ENCODE measurements at regions of chr7 and their contacts with region 1.

Region 1: DNA sequence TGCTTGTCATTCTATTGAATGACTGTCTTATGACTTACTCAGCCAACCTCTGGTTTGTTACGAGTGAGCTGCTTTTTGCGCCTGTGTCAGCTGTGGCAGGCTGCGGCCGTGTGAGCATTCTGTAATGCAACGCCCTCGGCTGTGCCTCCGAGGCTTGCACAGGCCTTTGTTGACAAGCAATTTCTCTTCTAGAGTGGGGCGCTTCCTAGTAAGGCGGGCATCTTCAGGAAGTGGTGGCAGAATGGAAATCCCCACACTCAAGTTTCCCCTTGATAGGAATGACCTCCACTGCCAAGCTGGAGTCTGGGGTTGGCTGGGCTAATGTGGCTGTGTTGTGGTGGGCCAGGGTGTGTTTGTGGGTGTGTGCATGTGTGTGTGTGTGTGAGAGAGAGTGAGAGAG is 20.2 kb upstream of the TMEM178B start:
- DNase-seq: peak; percentile 84
- H3K4me3 Mint-ChIP-seq: no peak overlapping the region
- H3K27ac Mint-ChIP-seq: peak overlapping the region; percentile 57
- H3K4me1 Mint-ChIP-seq: peaks cover 22% of the 10 kb centered on the region
- H3K27me3 Mint-ChIP-seq: no peaks in the 10 kb centered on the region

Region 2: DNA sequence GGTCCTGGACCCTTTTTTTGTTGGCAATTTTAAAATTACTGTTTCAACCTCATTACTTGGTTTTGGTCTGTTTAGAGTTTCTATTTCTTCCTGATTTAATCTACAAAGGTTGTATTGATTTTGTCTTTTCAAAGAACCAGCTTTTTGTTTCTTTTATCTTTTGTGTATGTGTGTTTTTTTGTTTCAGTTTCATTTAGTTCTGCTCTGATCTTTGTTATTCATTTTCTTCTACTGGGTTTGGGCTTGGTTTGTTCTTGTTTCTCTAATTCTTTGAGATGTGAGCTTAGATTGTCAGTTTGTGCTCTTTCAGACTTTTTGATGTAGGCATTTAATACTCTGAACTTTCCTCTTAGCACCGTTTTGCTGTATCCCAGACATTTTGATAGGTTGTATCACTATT is 30.3 kb before region 1 on chr7:
- CTCF ChIA-PET with region 1: no interaction called
- POLR2A ChIA-PET with region 1: no interaction called
- intact Hi-C with region 1: loop called (anchors 2 kb)
- DNase-seq: no peak
- H3K4me3 Mint-ChIP-seq: peak overlapping the region; percentile 0
- H3K27ac Mint-ChIP-seq: peak overlapping the region; percentile 20
- H3K4me1 Mint-ChIP-seq: peaks cover 17% of the 10 kb centered on the region
- H3K27me3 Mint-ChIP-seq: peaks cover 6% of the 10 kb centered on the region

Region 3: GRCh38 chr7:141103847-141104429 is 50.3 kb after region 1 on chr7:
- CTCF ChIA-PET with region 1: no interaction called
- POLR2A ChIA-PET with region 1: no interaction called
- intact Hi-C with region 1: no loop called
- DNase-seq: no peak
- H3K4me3 Mint-ChIP-seq: no peak overlapping the region
- H3K27ac Mint-ChIP-seq: no peak overlapping the region
- H3K4me1 Mint-ChIP-seq: no peaks in the 10 kb centered on the region
- H3K27me3 Mint-ChIP-seq: peaks cover 1% of the 10 kb centered on the region